ENCODE measurements at regions of chr11 and their contacts with region 1.

Region 1: DNA sequence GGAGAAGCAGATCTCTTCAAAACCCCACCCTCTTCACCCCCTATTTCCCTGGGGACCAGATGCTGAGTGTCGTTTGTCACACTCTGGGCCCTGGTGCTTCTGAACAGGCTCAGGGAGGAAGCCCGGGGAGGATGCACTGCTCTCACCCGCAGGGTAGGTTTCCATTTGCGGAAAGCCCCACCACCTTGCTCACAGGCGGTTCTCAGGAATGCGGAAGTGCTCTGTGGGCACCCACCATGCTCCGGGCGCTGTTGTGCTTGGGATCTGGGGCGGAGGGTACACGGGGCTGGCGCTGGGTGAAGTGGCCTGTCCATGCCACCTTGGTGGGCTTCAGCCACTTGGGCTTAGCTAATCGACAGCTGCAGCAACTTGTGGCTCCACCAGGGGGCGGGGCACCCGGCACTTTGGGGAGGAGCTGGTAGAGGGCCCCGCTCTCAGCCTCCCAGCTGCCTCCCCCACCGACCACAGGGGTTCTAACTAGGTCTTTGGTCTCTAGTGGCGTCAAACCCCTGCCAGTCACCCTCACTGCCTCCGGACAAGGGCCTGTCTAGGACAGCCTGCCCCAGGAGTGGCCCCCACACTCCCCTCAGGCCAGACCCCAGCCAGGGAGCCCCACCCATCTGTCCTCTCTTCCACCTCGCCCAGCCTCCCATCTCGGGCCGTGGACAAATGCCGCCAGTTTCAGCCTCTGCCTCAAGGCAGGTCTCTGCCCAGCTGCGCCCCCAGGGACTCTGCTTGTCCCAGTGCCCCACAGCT is 7.4 kb downstream of the NDUFV1 start:
- DNase-seq: peak in 1 of 2 experiments; percentile 93
- H3K4me3 ChIP-seq: peak overlapping the region in 1 of 4 experiments; percentile 18; a peak in 1 of 8 replicates
- H3K27ac ChIP-seq: no peak overlapping the region
- H3K4me1 ChIP-seq: peaks cover 13 to 36% (median 31%) of the 10 kb centered on the region in 4 experiments
- H3K27me3 ChIP-seq: peaks cover 0 to 10% (median 5%) of the 10 kb centered on the region in 4 experiments; a peak in 6 of 7 replicates
- CTCF ChIP-seq: peak in 2 of 3 experiments; percentile 77 to 79; a peak in 3 of 4 replicates
- EP300 ChIP-seq: no peak
- POLR2A ChIP-seq: no peak
- RAD21 ChIP-seq: peak; percentile 24 to 45

Region 2: GRCh38 chr11:67592880-67593564 is 21.1 kb before region 1 on chr11:
- CTCF ChIA-PET with region 1: interaction called, 21 read pairs
- POLR2A ChIA-PET with region 1: interaction called, 7 read pairs
- DNase-seq: peak in 1 of 2 experiments; percentile 44
- H3K4me3 ChIP-seq: no peak overlapping the region
- H3K27ac ChIP-seq: no peak overlapping the region
- H3K4me1 ChIP-seq: peaks cover 0 to 3% (median 1%) of the 10 kb centered on the region in 4 experiments; a peak in 1 of 7 replicates
- H3K27me3 ChIP-seq: no peaks in the 10 kb centered on the region; a peak in 1 of 7 replicates
- CTCF ChIP-seq: no peak
- EP300 ChIP-seq: no peak
- POLR2A ChIP-seq: no peak
- RAD21 ChIP-seq: no peak

Measured in H1 (cell line).